IMR-90 (cell line): ENCODE measurements at regions of chr12 and their contacts with region 1.

Region 1: GRCh38 chr12:131928711-131929580 is at the start of gene PUS1:
- DNase-seq: peak; percentile 91
- ATAC-seq: peak; percentile 96
- H3K4me3 ChIP-seq: peak within 1 kb of the TSS; percentile 97
- H3K27ac ChIP-seq: peak within 1 kb of the TSS; percentile 83
- H3K4me1 ChIP-seq: peaks cover 2% of the 10 kb centered on the region
- H3K27me3 ChIP-seq: no peaks in the 10 kb centered on the region
- CTCF ChIP-seq: no peak
- POLR2A ChIP-seq: peak; percentile 85
- RAD21 ChIP-seq: no peak
- total RNA-seq, gene PUS1: 11.4 and 14.0 TPM in 2 replicates

Region 2: DNA sequence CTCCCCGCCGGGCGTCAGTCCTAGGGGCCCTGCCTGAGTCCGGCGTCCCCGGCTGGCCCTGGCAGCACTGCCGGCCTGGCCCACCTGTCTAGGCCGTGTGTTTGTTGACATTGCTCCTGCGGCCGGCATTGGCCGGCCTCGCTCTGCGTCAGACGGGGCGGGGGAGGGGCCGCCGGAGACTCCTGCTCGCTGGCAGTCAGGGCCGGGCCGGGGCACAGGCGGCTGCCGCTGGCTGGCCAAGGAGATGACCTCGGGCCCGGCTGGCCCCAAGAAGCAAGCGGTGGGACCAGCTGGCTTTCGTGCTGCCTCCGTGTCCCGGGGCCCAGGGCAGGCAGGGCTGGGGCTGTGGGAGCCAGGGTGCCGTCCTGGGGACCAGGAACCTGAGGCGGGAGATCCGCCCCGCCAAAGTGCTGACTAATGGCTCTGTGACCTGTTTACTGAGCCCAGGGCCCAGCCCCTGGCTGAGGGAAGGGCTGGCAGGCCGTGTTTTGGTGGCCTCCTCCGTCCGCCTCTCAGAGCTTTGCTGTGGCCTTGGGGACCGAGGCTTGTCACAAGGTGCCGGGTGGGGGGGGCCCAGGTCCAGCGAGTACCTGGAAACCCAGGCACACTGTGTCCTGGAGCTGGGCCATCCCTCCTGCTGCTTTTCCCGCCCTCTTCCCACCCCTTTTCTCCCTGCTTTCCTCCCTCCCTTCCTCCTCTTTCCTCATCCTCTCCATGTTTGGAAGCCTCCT is 32.7 kb before region 1 on chr12:
- CTCF ChIA-PET with region 1: no interaction called
- POLR2A ChIA-PET with region 1: no interaction called
- dilution Hi-C with region 1: no loop called
- in situ Hi-C with region 1: no loop called
- intact Hi-C with region 1: loop called (anchors 2 kb)
- DNase-seq: peak; percentile 89
- ATAC-seq: peak; percentile 78
- H3K4me3 ChIP-seq: peak overlapping the region; percentile 59
- H3K27ac ChIP-seq: peak overlapping the region; percentile 87
- H3K4me1 ChIP-seq: peaks cover 10% of the 10 kb centered on the region
- H3K27me3 ChIP-seq: no peaks in the 10 kb centered on the region; the same call in 1 of the 2 replicates
- CTCF ChIP-seq: no peak
- POLR2A ChIP-seq: peak; percentile 94
- RAD21 ChIP-seq: 0 out of 2 replicates have a peak, but pooled peaks have one; percentile 10